CD8-positive, alpha-beta memory T cell (primary cell): ENCODE measurements at regions of chr19 and their contacts with region 1.

Region 1: GRCh38 chr19:39970675-39971379 is at the start of gene PSMC4:
- DNase-seq: peak; percentile 97 to 99 (median 98)
- H3K4me3 ChIP-seq: peak within 1 kb of the TSS; percentile 84
- H3K4me3 Mint-ChIP-seq: peak within 1 kb of the TSS; percentile 91 to 99 (median 95)
- H3K27ac ChIP-seq: peak within 1 kb of the TSS; percentile 96
- H3K27ac Mint-ChIP-seq: peak within 1 kb of the TSS; percentile 93 to 100 (median 98)
- H3K4me1 ChIP-seq: peaks cover 32% of the 10 kb centered on the region
- H3K4me1 Mint-ChIP-seq: peaks cover 47 to 68% (median 51%) of the 10 kb centered on the region in 3 donors
- H3K27me3 ChIP-seq: no peaks in the 10 kb centered on the region
- H3K27me3 Mint-ChIP-seq: no peaks in the 10 kb centered on the region
- total RNA-seq, gene PSMC4: 170 to 179 TPM

Region 2: DNA sequence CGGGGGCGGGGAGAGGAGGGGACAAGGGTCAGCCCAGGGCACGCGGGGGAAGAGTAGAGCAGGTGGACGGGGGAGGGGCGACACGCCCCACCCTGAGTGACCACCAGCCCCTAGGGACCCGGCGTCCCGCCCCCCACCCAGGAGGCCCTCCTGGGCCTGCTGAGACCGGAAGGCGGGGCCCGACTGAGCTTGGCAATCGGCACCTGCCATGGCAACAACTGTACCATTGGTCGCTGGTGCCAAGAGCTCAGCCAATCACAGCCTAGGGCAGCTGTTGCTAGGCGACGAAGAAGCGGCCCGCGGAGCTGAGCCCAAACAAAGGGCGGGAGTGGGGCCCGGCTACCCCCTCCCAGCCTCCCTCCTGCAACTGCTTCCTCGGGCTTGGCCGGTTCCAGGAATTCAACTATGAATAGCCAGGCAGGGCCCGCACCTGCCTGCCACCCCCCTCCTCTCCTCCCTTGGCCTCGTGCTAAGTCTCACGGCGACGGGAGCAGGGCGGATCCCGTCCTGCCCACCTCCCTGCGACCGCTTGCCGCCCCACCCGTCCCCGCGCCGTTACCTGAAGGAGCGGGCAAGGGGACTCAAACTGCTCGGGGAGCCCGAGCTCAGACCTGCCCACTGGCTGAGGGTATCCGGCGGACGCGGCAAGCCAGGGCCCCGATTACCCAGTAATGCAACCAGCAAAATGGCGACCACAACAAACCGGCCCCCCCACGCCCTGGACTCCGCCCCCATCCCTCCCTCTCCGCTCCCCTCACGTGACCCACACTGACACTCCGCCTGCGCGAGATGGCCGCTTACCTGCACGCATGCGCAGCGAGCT is 137.2 kb before region 1 on chr19 and contains the start of gene DYRK1B:
- CTCF ChIA-PET with region 1: interaction called, 13 read pairs
- POLR2A ChIA-PET with region 1: interaction called, 11 read pairs
- DNase-seq: peak; percentile 97 to 99 (median 97)
- H3K4me3 ChIP-seq: peak within 1 kb of the TSS; percentile 96
- H3K4me3 Mint-ChIP-seq: peak within 1 kb of the TSS; percentile 80 to 95 (median 85)
- H3K27ac ChIP-seq: peak within 1 kb of the TSS; percentile 97
- H3K27ac Mint-ChIP-seq: peak within 1 kb of the TSS; percentile 70 to 98 (median 94)
- H3K4me1 ChIP-seq: peaks cover 19% of the 10 kb centered on the region
- H3K4me1 Mint-ChIP-seq: peaks cover 29 to 43% (median 31%) of the 10 kb centered on the region in 3 donors
- H3K27me3 ChIP-seq: no peaks in the 10 kb centered on the region
- H3K27me3 Mint-ChIP-seq: no peaks in the 10 kb centered on the region
- total RNA-seq, gene DYRK1B: 7.9 to 9.1 TPM

Region 3: GRCh38 chr19:39889872-39890545 is 80.8 kb before region 1 on chr19:
- CTCF ChIA-PET with region 1: interaction called, 12 read pairs
- POLR2A ChIA-PET with region 1: no interaction called
- DNase-seq: no peak
- H3K4me3 ChIP-seq: no peak overlapping the region
- H3K4me3 Mint-ChIP-seq: no peak overlapping the region
- H3K27ac ChIP-seq: no peak overlapping the region
- H3K27ac Mint-ChIP-seq: no peak overlapping the region
- H3K4me1 ChIP-seq: no peaks in the 10 kb centered on the region
- H3K4me1 Mint-ChIP-seq: peaks cover 0 to 6% (median 4%) of the 10 kb centered on the region in 3 donors
- H3K27me3 ChIP-seq: no peaks in the 10 kb centered on the region
- H3K27me3 Mint-ChIP-seq: no peaks in the 10 kb centered on the region

Region 4: DNA sequence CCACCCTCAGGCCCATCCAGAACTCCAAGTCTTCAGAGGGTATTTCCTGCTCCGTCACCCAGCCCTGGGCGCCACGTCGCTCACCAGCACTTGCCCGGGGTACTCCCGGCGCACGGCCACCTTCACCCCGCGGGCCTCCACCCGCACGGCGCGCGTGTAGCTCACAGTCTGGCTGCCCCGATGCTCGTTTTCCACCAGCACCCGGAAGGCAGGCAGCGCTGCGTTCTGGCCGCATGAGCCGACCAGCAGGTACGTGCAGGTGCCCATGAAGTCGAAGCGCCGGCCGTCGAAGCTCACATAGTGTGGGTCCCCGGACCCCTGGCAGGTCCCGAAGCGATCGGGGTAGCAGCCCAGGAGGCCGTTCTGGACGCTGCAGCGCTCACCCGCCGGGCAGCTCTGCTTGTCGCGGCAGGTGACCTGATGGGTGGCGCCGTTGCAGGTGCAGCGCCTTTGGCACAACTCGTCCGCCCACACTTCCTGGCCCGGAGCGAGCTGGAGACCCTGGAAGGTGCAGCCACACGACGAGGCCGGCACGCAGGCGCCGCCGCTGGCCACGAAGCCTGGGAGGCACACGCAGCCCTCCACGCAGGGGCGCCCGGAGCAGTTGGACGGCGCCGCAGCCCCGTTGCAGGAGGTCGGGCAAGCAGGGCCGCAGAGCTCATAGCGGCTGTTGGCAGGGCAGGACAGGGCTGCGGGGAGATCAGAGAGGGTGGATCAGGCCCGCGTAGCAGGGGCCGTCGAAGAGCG is 55.6 kb before region 1 on chr19:
- CTCF ChIA-PET with region 1: interaction called, 25 read pairs
- POLR2A ChIA-PET with region 1: no interaction called
- DNase-seq: no peak
- H3K4me3 ChIP-seq: no peak overlapping the region
- H3K4me3 Mint-ChIP-seq: no peak overlapping the region
- H3K27ac ChIP-seq: no peak overlapping the region
- H3K27ac Mint-ChIP-seq: peak overlapping the region in 1 of 8 donors; percentile 74
- H3K4me1 ChIP-seq: no peaks in the 10 kb centered on the region
- H3K4me1 Mint-ChIP-seq: peaks cover 9 to 15% (median 11%) of the 10 kb centered on the region in 3 donors
- H3K27me3 ChIP-seq: no peaks in the 10 kb centered on the region
- H3K27me3 Mint-ChIP-seq: no peaks in the 10 kb centered on the region

Region 5: DNA sequence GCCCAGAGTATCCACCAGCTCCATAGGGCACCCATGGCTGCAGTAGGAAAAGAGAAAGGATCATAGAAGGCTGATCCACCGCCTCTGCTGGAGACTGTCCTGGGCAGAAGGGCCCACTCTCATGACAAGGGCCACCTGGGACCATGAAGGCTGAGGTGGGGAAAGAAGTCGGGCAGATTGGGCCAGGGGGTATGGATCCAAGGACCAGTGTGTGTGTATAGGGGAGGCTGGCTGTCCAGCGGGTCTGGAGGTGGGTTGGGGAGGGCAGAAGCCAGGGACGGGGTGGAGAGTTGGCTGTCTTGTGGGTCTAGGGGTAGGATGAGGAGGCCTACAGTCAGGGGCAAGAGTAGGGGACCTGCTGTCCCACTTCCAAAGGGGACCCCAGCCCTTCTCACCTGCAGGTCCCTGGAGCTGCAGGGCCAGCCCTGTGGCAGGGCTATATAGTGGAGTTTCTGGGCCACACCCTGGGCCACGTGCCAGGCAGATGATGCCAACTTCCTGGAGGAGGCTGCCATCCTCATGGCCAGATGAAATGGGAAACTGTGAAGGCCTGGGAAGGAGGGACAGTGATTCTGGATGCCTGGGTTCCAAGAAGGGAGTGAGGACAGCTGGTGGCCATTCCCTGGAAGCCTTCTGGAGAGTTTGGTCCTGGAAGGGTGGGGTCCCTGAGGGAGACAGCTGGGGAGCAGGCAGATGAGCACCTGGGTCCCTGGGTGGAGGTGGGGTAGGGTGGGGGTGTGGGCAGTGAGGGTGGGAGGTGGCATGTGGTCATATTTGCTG is 36.1 kb before region 1 on chr19 and contains the start of gene FCGBP:
- CTCF ChIA-PET with region 1: interaction called, 79 read pairs
- POLR2A ChIA-PET with region 1: interaction called, 4 read pairs
- DNase-seq: no peak
- H3K4me3 ChIP-seq: no peak within 1 kb of the TSS
- H3K4me3 Mint-ChIP-seq: peak within 1 kb of the TSS in 4 of 7 donors; percentile 17 to 61 (median 34)
- H3K27ac ChIP-seq: no peak within 1 kb of the TSS
- H3K27ac Mint-ChIP-seq: peak within 1 kb of the TSS; percentile 30 to 87 (median 80)
- H3K4me1 ChIP-seq: peaks cover 40% of the 10 kb centered on the region
- H3K4me1 Mint-ChIP-seq: peaks cover 47 to 67% (median 60%) of the 10 kb centered on the region in 3 donors
- H3K27me3 ChIP-seq: no peaks in the 10 kb centered on the region
- H3K27me3 Mint-ChIP-seq: no peaks in the 10 kb centered on the region
- total RNA-seq, gene FCGBP: 7.0 to 7.9 TPM

Region 6: DNA sequence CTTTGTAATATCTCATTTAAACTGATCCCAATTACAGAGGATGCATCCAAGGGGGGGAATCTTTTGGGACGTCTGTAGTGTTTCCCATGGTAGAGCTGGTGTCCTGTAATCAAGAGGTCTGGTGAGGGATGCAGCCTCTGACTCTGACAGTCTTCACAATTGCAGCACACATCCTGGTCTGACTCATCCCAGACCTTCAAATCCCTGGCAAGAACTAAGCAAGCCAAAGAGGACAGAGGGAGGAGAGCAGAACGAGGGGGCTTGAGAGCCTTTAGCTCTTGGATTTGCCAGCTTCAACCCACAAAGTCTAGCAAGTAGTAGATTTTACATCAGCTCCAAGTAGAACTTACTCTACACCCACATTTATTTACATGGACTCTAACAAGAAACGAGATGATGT is 19.1 kb before region 1 on chr19:
- CTCF ChIA-PET with region 1: interaction called, 55 read pairs
- POLR2A ChIA-PET with region 1: interaction called, 13 read pairs
- DNase-seq: no peak
- H3K4me3 ChIP-seq: peak overlapping the region; percentile 20
- H3K4me3 Mint-ChIP-seq: peak overlapping the region; percentile 53 to 88 (median 83)
- H3K27ac ChIP-seq: no peak overlapping the region
- H3K27ac Mint-ChIP-seq: peak overlapping the region; percentile 94 to 100 (median 98)
- H3K4me1 ChIP-seq: peaks cover 78% of the 10 kb centered on the region
- H3K4me1 Mint-ChIP-seq: peaks cover 66 to 85% (median 83%) of the 10 kb centered on the region in 3 donors
- H3K27me3 ChIP-seq: no peaks in the 10 kb centered on the region
- H3K27me3 Mint-ChIP-seq: peaks cover 0 to 2% of the 10 kb centered on the region in 2 donors

Region 7: DNA sequence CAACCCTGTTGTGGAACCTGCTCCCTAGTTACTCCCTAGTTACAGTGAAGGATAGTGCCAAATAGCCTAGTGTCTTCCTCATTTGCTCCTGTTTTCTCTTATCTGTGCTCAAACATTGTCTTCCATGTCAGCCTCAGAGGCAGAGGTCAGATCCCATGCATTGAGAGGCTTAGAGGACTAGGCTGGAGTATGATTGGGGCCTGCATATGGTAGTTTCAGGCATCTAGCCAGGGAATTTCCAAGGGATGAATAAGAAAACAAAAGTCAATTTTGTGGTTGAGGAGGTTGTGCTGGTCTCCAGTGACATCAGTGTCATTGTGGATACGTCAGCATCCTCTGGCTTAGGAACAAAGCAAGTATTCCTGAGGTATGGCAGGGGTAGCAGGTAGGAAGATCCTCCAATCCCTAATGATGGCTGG is 35.5 kb after region 1 on chr19:
- CTCF ChIA-PET with region 1: no interaction called
- POLR2A ChIA-PET with region 1: no interaction called
- DNase-seq: no peak
- H3K4me3 ChIP-seq: no peak overlapping the region
- H3K4me3 Mint-ChIP-seq: no peak overlapping the region
- H3K27ac ChIP-seq: peak overlapping the region; percentile 56
- H3K27ac Mint-ChIP-seq: peak overlapping the region in 1 of 8 donors; percentile 2
- H3K4me1 ChIP-seq: no peaks in the 10 kb centered on the region
- H3K4me1 Mint-ChIP-seq: no peaks in the 10 kb centered on the region
- H3K27me3 ChIP-seq: no peaks in the 10 kb centered on the region
- H3K27me3 Mint-ChIP-seq: no peaks in the 10 kb centered on the region

Region 8: DNA sequence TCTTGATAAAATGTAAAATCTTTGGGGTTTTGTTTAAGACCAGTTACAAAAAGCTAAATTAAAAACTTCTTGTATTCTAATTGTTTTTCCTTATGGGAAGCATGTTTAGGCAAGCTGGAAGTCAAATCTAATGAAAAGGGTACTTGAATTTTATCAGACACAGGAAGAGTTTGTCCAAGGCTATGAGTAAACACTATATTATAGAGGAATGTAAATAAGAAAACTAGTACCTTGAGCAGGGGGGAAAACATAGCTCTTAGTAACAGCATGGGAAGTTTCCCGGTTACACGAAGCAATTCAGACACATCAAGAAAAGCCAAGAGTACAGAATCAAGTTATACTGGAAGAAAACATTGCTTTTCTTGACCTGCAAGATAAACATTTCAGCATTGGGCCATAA is 139.7 kb after region 1 on chr19:
- CTCF ChIA-PET with region 1: no interaction called
- POLR2A ChIA-PET with region 1: no interaction called
- DNase-seq: no peak
- H3K4me3 ChIP-seq: no peak overlapping the region
- H3K4me3 Mint-ChIP-seq: no peak overlapping the region
- H3K27ac ChIP-seq: no peak overlapping the region
- H3K27ac Mint-ChIP-seq: no peak overlapping the region
- H3K4me1 ChIP-seq: no peaks in the 10 kb centered on the region
- H3K4me1 Mint-ChIP-seq: no peaks in the 10 kb centered on the region
- H3K27me3 ChIP-seq: no peaks in the 10 kb centered on the region
- H3K27me3 Mint-ChIP-seq: peaks cover 3 to 11% of the 10 kb centered on the region in 2 donors